Calu3 (cell line): ENCODE measurements at regions of chr1 and their contacts with region 1.

Region 1: DNA sequence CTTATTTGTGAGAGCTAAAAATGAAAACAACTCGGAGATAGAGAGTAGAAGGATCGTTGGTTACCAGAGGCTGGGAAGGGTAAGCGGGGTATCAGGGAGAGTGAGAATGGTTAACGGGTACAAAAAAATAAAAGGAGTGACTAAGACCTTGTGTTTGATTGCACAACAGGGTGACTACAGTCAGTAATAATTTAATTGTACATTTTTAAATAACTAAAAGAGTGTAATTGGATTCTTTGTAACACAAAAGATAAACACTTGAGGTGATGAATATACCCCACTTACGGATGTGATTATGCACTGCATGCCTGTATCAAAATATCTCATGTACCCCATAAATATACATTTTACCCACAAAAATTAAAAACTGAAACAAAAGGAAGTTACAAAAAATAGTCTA is 29.4 kb downstream of the FOXJ3 start:
- DNase-seq: no peak
- H3K4me3 Mint-ChIP-seq: no peak overlapping the region
- H3K27ac Mint-ChIP-seq: no peak overlapping the region
- H3K4me1 Mint-ChIP-seq: peaks cover 7% of the 10 kb centered on the region
- H3K27me3 Mint-ChIP-seq: no peaks in the 10 kb centered on the region
- CTCF ChIP-seq: no peak

Region 2: GRCh38 chr1:42368096-42368795 is 62.6 kb after region 1 on chr1:
- CTCF ChIA-PET with region 1: interaction called, 4 read pairs
- intact Hi-C with region 1: loop called (anchors 10 kb)
- DNase-seq: peak; percentile 8
- H3K4me3 Mint-ChIP-seq: no peak overlapping the region
- H3K27ac Mint-ChIP-seq: peak overlapping the region; percentile 34
- H3K4me1 Mint-ChIP-seq: peaks cover 34% of the 10 kb centered on the region
- H3K27me3 Mint-ChIP-seq: peaks cover 15% of the 10 kb centered on the region
- CTCF ChIP-seq: no peak

Region 3: DNA sequence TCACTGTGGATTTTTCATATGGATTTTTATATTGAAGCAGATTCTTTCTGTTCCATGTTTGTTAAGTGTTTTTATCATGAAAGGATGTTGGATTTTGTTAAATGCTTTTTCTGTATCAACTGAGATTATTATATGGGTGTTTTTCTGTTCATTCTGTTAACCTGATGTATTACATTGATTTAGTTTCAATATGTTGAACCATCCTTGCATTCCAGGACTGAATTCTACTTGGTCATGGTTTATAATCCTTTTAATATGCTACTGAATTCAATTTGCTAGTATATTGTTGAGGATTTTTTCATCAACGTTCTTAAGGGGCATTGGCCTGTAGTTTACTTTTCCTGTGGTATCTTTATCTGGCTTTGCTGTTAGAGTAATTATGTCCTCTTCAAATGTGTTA is 213.3 kb after region 1 on chr1:
- CTCF ChIA-PET with region 1: no interaction called
- intact Hi-C with region 1: no loop called
- DNase-seq: no peak
- H3K4me3 Mint-ChIP-seq: no peak overlapping the region
- H3K27ac Mint-ChIP-seq: no peak overlapping the region
- H3K4me1 Mint-ChIP-seq: no peaks in the 10 kb centered on the region
- H3K27me3 Mint-ChIP-seq: no peaks in the 10 kb centered on the region
- CTCF ChIP-seq: no peak

Region 4: GRCh38 chr1:42567043-42567442 is 261.4 kb after region 1 on chr1:
- CTCF ChIA-PET with region 1: no interaction called
- intact Hi-C with region 1: no loop called
- DNase-seq: no peak
- H3K4me3 Mint-ChIP-seq: no peak overlapping the region
- H3K27ac Mint-ChIP-seq: no peak overlapping the region
- H3K4me1 Mint-ChIP-seq: no peaks in the 10 kb centered on the region
- H3K27me3 Mint-ChIP-seq: no peaks in the 10 kb centered on the region
- CTCF ChIP-seq: no peak

Region 5: DNA sequence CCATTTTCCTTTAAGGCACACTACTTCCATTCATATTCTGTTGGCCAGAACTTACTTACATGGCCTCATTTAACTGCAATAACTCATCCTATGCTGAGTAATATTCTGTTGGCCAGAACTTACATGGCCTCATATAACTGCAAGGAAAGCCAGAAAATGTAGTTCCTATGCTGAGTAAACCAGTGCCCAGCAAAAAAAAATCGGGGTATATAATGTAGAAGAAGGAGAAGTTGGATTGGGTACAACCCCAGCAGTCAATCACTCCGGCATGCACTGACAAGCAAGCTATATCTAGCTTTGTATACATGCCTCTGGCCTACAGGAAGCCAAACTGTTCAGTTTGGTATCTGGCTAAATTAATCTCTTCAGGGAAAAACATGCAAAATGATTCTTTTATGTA is 313.2 kb after region 1 on chr1:
- CTCF ChIA-PET with region 1: no interaction called
- intact Hi-C with region 1: no loop called
- DNase-seq: no peak
- H3K4me3 Mint-ChIP-seq: no peak overlapping the region
- H3K27ac Mint-ChIP-seq: no peak overlapping the region
- H3K4me1 Mint-ChIP-seq: no peaks in the 10 kb centered on the region
- H3K27me3 Mint-ChIP-seq: peaks cover 15% of the 10 kb centered on the region
- CTCF ChIP-seq: no peak